Activated T-helper 1 cell treated with anti-CD3 and anti-CD28 coated beads, Interleukin-12 subunit alpha, Interleukin-12 subunit beta, Interleukin-2, Interleukin-4 antibody, amounts not matched to agents 30 ng/mL and 10 ng/mL and 1 ng/mL, durations not matched to agents 14 hours and 24 hours and 36 hours (primary cell): ENCODE measurements at regions of chrX and their contacts with region 1.

Region 1: DNA sequence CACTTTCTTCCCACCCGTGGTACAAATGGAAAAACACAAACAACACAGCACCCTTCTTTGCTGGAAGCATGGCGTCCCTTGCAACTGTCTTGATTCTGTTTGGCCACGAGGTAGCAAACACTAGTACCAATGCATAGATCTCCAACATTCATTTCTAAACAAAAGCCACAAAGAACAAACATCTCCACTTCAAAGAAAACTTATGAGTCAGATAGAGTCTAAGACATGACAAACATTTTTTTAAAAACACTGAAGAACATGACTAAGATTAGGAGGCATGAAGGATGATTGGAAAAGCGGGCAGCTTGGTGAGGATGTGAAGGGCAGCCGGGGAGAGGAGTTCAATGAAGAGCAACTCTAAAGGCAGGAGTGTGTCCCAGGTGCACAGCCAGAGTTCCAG is 197.6 kb upstream of the FAM9B start:
- DNase-seq: no peak
- H3K4me3 Mint-ChIP-seq: no peak overlapping the region
- H3K27ac Mint-ChIP-seq: peak overlapping the region; percentile 52
- H3K4me1 Mint-ChIP-seq: peaks cover 14% of the 10 kb centered on the region
- H3K27me3 Mint-ChIP-seq: peaks cover 2% of the 10 kb centered on the region

Region 2: GRCh38 chrX:9087271-9088040 is 144.0 kb before region 1 on chrX:
- intact Hi-C with region 1: no loop called
- DNase-seq: no peak
- H3K4me3 Mint-ChIP-seq: no peak overlapping the region
- H3K27ac Mint-ChIP-seq: no peak overlapping the region
- H3K4me1 Mint-ChIP-seq: no peaks in the 10 kb centered on the region
- H3K27me3 Mint-ChIP-seq: peaks cover 5% of the 10 kb centered on the region

Region 3: DNA sequence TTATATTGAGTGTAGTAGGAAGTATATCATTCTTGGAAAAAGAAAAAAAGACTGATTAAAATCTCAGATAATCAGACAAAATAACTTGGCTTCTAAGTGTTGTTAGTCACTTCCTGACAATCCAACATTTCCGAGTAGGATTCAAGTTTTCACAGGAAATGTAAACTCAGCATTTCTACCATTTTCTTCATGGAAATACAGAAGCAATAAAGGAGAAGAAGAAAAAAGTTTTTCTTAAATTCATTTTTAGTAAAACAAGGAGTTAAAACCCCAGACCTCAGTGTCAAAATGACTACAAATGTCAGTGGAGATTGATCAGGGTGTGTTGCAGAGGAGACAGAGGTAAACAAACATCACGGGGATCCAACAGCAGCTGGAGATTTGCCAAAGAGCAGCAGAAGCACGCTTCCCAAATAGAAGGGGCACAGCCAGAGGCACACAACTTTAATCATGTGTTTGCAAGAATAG is 68.2 kb before region 1 on chrX:
- intact Hi-C with region 1: loop called (anchors 2 kb)
- DNase-seq: no peak
- H3K4me3 Mint-ChIP-seq: no peak overlapping the region
- H3K27ac Mint-ChIP-seq: no peak overlapping the region
- H3K4me1 Mint-ChIP-seq: peaks cover 25% of the 10 kb centered on the region
- H3K27me3 Mint-ChIP-seq: no peaks in the 10 kb centered on the region

Region 4: DNA sequence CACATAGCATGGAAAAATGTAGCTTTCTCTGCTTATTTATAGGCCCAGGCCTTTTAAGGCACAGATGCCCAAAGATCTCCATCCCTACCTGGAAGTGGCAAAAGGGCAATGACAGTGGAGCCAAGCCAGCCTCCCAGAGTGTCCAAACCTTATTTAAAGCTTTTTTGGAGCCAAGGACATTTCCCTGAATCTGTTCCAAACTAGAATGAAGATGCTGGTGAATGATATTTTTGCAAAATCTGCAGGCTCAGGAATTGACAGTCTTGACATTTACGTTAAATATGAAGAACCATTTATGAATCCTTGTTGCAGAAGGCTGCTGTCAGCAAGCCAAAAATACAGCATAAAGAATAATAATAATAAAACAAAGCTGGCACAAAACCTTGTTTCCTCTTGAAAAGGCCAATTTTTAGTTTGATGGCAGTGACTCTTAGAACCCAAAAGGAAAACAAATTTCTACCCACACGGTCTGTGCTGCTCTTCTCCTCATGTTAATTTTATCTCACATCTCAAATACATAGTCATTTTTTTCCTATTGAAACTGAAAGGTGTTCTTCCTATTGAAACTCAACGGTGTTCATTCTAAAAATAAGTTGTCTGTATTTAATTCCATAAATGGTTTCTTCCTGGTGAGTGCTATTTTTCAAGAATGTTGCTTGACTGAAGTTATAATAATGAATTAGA is 27.1 kb after region 1 on chrX:
- intact Hi-C with region 1: loop called (anchors 1 kb)
- DNase-seq: no peak
- H3K4me3 Mint-ChIP-seq: no peak overlapping the region
- H3K27ac Mint-ChIP-seq: peak overlapping the region; percentile 36
- H3K4me1 Mint-ChIP-seq: peaks cover 26% of the 10 kb centered on the region
- H3K27me3 Mint-ChIP-seq: no peaks in the 10 kb centered on the region

Region 5: DNA sequence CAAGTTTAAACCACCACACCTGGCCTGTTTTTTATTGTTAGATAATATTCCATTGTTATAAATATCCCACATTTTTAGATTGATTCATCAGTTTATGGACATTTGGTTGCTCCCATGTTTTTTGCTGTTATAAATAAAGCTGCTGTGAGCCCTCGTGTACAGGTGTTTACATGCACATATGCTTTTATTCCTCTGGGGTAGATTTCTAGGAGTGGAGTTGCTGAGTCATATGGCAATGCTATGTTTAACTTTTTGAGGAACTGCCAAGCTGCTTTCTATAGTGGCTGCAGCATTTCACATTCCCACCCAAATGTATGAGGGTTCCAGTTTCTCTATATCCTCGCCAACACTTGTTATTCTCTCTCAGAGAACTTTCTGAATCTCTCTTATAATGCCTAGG is 323.9 kb after region 1 on chrX:
- intact Hi-C with region 1: no loop called
- DNase-seq: no peak
- H3K4me3 Mint-ChIP-seq: no peak overlapping the region
- H3K27ac Mint-ChIP-seq: no peak overlapping the region
- H3K4me1 Mint-ChIP-seq: no peaks in the 10 kb centered on the region
- H3K27me3 Mint-ChIP-seq: no peaks in the 10 kb centered on the region

Region 6: GRCh38 chrX:10828640-10829039 is 1597.1 kb after region 1 on chrX:
- intact Hi-C with region 1: no loop called
- DNase-seq: no peak
- H3K4me3 Mint-ChIP-seq: no peak overlapping the region
- H3K27ac Mint-ChIP-seq: no peak overlapping the region
- H3K4me1 Mint-ChIP-seq: no peaks in the 10 kb centered on the region
- H3K27me3 Mint-ChIP-seq: no peaks in the 10 kb centered on the region